ENCODE measurements at regions of chr12 and their contacts with region 1.

Region 1: DNA sequence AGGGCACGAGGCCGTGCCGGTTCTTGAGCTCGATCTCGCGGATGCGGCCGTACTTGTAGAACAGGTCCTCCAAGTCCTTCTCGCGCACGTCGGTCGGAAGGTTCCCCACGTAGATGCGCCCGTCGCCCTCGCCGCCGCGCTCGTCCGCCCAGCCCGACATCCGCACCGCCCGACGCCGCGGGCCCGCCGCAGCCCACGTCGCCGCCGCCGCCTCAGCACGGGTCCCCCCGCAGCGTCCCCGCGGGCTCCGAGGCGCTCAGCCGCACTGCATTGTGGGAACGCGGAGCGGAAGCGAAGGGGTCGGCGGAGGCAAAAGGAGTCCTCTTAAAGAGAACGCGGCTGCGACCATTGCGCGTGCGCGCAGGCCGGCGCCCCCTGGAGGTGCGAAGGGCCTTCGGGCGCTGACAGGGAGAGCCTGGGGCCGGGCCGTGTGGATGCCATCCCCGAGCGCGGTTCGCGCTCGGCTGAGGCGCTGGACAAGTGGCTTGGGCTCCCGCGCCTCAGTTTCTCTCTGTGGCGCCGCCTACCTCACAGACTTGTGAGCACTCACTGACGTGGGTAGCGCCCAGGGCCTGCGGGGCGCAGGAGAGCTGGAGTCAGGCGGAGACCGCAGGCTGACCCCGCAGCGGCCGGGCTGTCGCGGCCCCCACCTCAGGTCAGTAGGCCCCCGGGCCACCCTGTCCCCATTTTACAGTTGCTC is at the start of gene SRSF9:
- DNase-seq: peak; percentile 95
- H3K4me3 Mint-ChIP-seq: peak within 1 kb of the TSS; percentile 88
- H3K27ac Mint-ChIP-seq: peak within 1 kb of the TSS; percentile 75
- H3K4me1 Mint-ChIP-seq: peaks cover 19% of the 10 kb centered on the region
- H3K27me3 Mint-ChIP-seq: no peaks in the 10 kb centered on the region
- CTCF ChIP-seq: peak; percentile 93
- total RNA-seq, gene SRSF9: 192 and 193 TPM in 2 replicates

Region 2: GRCh38 chr12:119808441-119808840 is 661.2 kb before region 1 on chr12:
- CTCF ChIA-PET with region 1: no interaction called
- POLR2A ChIA-PET with region 1: no interaction called
- intact Hi-C with region 1: no loop called
- DNase-seq: peak; percentile 16
- H3K4me3 Mint-ChIP-seq: peak overlapping the region; percentile 46
- H3K27ac Mint-ChIP-seq: peak overlapping the region; percentile 72
- H3K4me1 Mint-ChIP-seq: peaks cover 19% of the 10 kb centered on the region
- H3K27me3 Mint-ChIP-seq: no peaks in the 10 kb centered on the region
- CTCF ChIP-seq: no peak

Region 3: GRCh38 chr12:120327593-120327992 is 142.0 kb before region 1 on chr12 and contains the start of gene PLA2G1B:
- CTCF ChIA-PET with region 1: interaction called, 14 read pairs
- POLR2A ChIA-PET with region 1: interaction called, 3 read pairs
- intact Hi-C with region 1: loop called (anchors 2 kb)
- DNase-seq: no peak
- H3K4me3 Mint-ChIP-seq: no peak within 1 kb of the TSS
- H3K27ac Mint-ChIP-seq: no peak within 1 kb of the TSS
- H3K4me1 Mint-ChIP-seq: peaks cover 11% of the 10 kb centered on the region
- H3K27me3 Mint-ChIP-seq: no peaks in the 10 kb centered on the region
- CTCF ChIP-seq: no peak
- total RNA-seq, gene PLA2G1B: not detected in 2 replicates

Region 4: DNA sequence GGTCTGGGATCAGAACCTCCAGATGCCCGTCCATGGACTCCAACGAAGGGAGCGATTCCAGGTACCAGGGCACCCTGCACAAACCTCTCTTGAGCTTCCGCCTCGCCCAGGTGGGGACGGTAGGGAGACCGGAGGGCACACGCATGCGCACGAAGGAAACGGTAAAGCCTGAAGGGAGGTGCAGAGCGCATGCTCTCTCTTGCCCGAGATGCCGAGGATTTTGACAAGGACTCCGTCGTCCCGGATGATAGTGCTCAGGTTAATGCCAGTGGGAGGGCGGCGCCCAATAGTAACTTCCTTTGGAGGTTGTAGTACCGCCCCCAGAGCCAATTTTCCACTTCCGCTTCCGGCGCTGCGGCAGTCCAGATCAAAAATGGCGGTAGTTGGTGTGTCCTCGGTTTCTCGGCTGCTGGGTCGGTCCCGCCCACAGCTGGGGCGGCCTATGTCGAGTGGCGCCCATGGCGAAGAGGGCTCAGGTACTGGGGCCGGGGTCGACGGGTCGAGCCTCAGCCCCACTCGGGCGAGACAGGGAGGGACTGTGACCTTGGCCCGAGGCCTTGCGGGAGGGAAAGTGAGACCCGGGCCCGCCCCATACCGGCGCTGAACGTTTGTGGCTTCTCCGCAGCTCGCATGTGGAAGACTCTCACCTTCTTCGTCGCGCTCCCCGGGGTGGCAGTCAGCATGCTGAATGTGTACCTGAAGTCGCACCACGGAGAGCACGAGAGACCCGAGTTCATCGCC is 31.7 kb before region 1 on chr12 and contains the start of gene COX6A1:
- CTCF ChIA-PET with region 1: interaction called, 40 read pairs
- POLR2A ChIA-PET with region 1: interaction called, 21 read pairs
- intact Hi-C with region 1: no loop called
- DNase-seq: peak; percentile 98
- H3K4me3 Mint-ChIP-seq: peak within 1 kb of the TSS; percentile 98
- H3K27ac Mint-ChIP-seq: peak within 1 kb of the TSS; percentile 92
- H3K4me1 Mint-ChIP-seq: peaks cover 6% of the 10 kb centered on the region
- H3K27me3 Mint-ChIP-seq: no peaks in the 10 kb centered on the region
- CTCF ChIP-seq: no peak
- total RNA-seq, gene COX6A1: 475 and 518 TPM in 2 replicates

Region 5: DNA sequence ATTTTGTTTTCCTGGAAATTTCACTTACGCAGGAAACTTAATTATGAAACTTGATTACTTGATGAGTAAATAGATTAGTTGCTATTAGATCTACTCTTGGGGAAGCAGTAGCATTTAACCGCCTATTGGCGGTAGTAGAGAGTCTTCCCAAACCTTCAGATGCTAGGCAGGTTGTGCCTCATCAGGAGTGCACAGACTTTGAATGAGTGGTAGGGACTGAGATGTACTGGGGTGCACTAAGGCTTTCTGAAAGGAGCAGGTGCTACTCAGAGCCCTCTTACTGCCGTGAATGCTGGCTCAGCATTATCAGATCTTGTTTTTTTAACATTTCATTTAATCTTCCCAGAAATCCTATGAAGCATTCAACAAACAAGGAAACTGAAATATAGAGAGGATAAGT is 15.6 kb before region 1 on chr12:
- CTCF ChIA-PET with region 1: interaction called, 42 read pairs
- POLR2A ChIA-PET with region 1: interaction called, 5 read pairs
- intact Hi-C with region 1: no loop called
- DNase-seq: peak; percentile 46
- H3K4me3 Mint-ChIP-seq: no peak overlapping the region
- H3K27ac Mint-ChIP-seq: no peak overlapping the region
- H3K4me1 Mint-ChIP-seq: no peaks in the 10 kb centered on the region
- H3K27me3 Mint-ChIP-seq: no peaks in the 10 kb centered on the region
- CTCF ChIP-seq: peak; percentile 58

Region 6: GRCh38 chr12:120528861-120529525 is 59.4 kb after region 1 on chr12 and contains the start of gene COQ5:
- CTCF ChIA-PET with region 1: no interaction called
- POLR2A ChIA-PET with region 1: interaction called, 20 read pairs
- intact Hi-C with region 1: no loop called
- DNase-seq: peak; percentile 90
- H3K4me3 Mint-ChIP-seq: peak within 1 kb of the TSS; percentile 79
- H3K27ac Mint-ChIP-seq: peak within 1 kb of the TSS; percentile 96
- H3K4me1 Mint-ChIP-seq: peaks cover 6% of the 10 kb centered on the region
- H3K27me3 Mint-ChIP-seq: no peaks in the 10 kb centered on the region
- CTCF ChIP-seq: no peak
- total RNA-seq, gene COQ5: 21.5 and 22.9 TPM in 2 replicates

Measured in MCF 10A (cell line).